ENCODE measurements at regions of chr1 and their contacts with region 1.

Region 1: GRCh38 chr1:234309598-234310459 is 63.4 kb upstream of the COA6 start:
- DNase-seq: peak; percentile 52 to 86 (median 66)
- ATAC-seq: peak; percentile 83
- H3K4me3 ChIP-seq: no peak overlapping the region
- H3K4me3 Mint-ChIP-seq: no peak overlapping the region
- H3K27ac ChIP-seq: no peak overlapping the region
- H3K27ac Mint-ChIP-seq: no peak overlapping the region
- H3K4me1 ChIP-seq: peaks cover 18% of the 10 kb centered on the region
- H3K4me1 Mint-ChIP-seq: peaks cover 3% of the 10 kb centered on the region
- H3K27me3 ChIP-seq: no peaks in the 10 kb centered on the region
- H3K27me3 Mint-ChIP-seq: peaks cover 15% of the 10 kb centered on the region
- CTCF ChIP-seq: peak; percentile 83

Region 2: GRCh38 chr1:234114648-234115307 is 195.1 kb before region 1 on chr1:
- CTCF ChIA-PET with region 1: interaction called, 4 read pairs
- POLR2A ChIA-PET with region 1: no interaction called
- intact Hi-C with region 1: loop called in 1 of 2 experiments (anchors 2 kb)
- DNase-seq: peak in 3 of 9 experiments; percentile 1 to 62 (median 38)
- ATAC-seq: no peak
- H3K4me3 ChIP-seq: no peak overlapping the region
- H3K4me3 Mint-ChIP-seq: peak overlapping the region; percentile 18
- H3K27ac ChIP-seq: no peak overlapping the region
- H3K27ac Mint-ChIP-seq: no peak overlapping the region
- H3K4me1 ChIP-seq: no peaks in the 10 kb centered on the region
- H3K4me1 Mint-ChIP-seq: peaks cover 5% of the 10 kb centered on the region
- H3K27me3 ChIP-seq: peaks cover 0 to 4% of the 10 kb centered on the region in 2 experiments
- H3K27me3 Mint-ChIP-seq: peaks cover 17% of the 10 kb centered on the region
- CTCF ChIP-seq: peak; percentile 40

Region 3: DNA sequence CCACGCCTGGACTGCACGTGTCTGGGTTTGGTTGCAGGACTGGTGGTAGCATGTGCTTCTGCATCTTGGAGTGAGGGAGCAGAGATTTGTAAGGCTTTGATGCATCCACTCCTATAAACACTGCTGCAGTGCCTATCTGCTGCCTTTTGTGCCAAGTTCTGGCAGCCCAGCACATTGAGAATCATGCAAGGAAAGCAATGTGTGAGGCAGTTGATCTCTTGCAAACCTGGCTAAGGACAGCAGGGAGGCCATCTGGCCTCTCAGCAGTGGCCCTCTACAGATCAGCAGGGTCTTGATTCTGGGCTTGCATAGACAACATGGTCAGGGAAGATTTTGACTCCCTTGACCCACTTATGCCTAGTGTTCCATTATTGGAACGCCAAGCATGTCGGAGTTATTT is 17.8 kb before region 1 on chr1:
- CTCF ChIA-PET with region 1: interaction called, 31 read pairs
- POLR2A ChIA-PET with region 1: interaction called, 5 read pairs
- intact Hi-C with region 1: no loop called
- DNase-seq: no peak
- ATAC-seq: no peak
- H3K4me3 ChIP-seq: no peak overlapping the region
- H3K4me3 Mint-ChIP-seq: no peak overlapping the region
- H3K27ac ChIP-seq: no peak overlapping the region
- H3K27ac Mint-ChIP-seq: no peak overlapping the region
- H3K4me1 ChIP-seq: no peaks in the 10 kb centered on the region
- H3K4me1 Mint-ChIP-seq: no peaks in the 10 kb centered on the region
- H3K27me3 ChIP-seq: no peaks in the 10 kb centered on the region
- H3K27me3 Mint-ChIP-seq: peaks cover 11% of the 10 kb centered on the region
- CTCF ChIP-seq: no peak

Region 4: GRCh38 chr1:234320549-234320948 is 10.7 kb after region 1 on chr1:
- CTCF ChIA-PET with region 1: interaction called, 48 read pairs
- POLR2A ChIA-PET with region 1: no interaction called
- intact Hi-C with region 1: no loop called
- DNase-seq: no peak
- ATAC-seq: no peak
- H3K4me3 ChIP-seq: no peak overlapping the region
- H3K4me3 Mint-ChIP-seq: no peak overlapping the region
- H3K27ac ChIP-seq: no peak overlapping the region
- H3K27ac Mint-ChIP-seq: no peak overlapping the region
- H3K4me1 ChIP-seq: peaks cover 15% of the 10 kb centered on the region
- H3K4me1 Mint-ChIP-seq: peaks cover 6% of the 10 kb centered on the region
- H3K27me3 ChIP-seq: no peaks in the 10 kb centered on the region
- H3K27me3 Mint-ChIP-seq: peaks cover 54% of the 10 kb centered on the region
- CTCF ChIP-seq: no peak

Measured in CD8-positive, alpha-beta T cell (primary cell).